ENCODE measurements at regions of chr19 and their contacts with region 1.

Region 1: GRCh38 chr19:50431343-50432220 is 1.1 kb upstream of the MYBPC2 start:
- DNase-seq: peak; percentile 88
- H3K4me3 Mint-ChIP-seq: peak overlapping the region; percentile 89
- H3K27ac Mint-ChIP-seq: peak overlapping the region; percentile 93
- H3K4me1 Mint-ChIP-seq: peaks cover 12% of the 10 kb centered on the region
- H3K27me3 Mint-ChIP-seq: peaks cover 13% of the 10 kb centered on the region

Region 2: DNA sequence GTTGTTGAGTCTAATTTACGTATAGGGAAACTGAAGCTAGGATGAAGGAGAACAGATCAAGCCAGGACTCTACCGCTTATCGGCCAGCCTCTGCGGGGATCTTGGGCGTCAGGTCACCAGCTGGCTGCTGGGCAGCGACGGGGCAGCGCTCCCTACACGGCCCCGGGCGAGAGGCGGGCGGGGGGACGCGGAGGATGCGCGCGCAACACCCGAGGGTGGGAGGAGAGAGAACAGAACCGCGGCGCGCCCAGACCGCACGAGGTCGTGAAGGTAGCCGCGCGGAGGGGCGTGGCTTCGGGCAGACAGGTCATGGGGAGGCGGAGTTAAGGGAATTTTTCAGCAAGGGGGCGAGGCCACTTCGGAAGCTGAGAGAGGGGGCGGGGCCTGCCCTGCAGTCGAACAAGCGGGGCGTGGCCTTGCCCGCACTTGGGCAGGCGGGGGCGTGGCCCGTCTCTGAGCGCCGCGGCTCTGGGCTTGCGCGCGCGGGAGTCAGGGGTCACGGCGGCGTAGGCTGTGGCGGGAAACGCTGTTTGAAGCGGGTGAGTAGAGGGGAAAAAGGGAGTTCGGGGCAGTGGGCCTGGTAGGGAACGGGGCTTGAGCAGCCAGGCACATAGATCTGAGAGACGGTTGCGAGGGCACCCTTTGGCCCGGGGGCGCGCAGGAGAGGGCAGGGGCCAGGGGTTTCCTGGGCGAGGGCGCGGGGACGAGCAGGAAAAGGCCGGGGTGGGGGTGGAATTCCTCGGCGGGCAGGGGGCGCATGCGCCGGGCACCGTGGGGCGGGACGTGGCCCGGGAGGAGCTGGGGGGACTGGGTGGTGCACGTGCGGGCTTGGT is 47.5 kb before region 1 on chr19 and contains the start of gene POLD1:
- intact Hi-C with region 1: loop called (anchors 1 kb)
- DNase-seq: peak; percentile 99
- H3K4me3 Mint-ChIP-seq: peak within 1 kb of the TSS; percentile 91
- H3K27ac Mint-ChIP-seq: peak within 1 kb of the TSS; percentile 96
- H3K4me1 Mint-ChIP-seq: peaks cover 28% of the 10 kb centered on the region
- H3K27me3 Mint-ChIP-seq: no peaks in the 10 kb centered on the region
- total RNA-seq, gene POLD1: 171 and 178 TPM in 2 replicates

Region 3: DNA sequence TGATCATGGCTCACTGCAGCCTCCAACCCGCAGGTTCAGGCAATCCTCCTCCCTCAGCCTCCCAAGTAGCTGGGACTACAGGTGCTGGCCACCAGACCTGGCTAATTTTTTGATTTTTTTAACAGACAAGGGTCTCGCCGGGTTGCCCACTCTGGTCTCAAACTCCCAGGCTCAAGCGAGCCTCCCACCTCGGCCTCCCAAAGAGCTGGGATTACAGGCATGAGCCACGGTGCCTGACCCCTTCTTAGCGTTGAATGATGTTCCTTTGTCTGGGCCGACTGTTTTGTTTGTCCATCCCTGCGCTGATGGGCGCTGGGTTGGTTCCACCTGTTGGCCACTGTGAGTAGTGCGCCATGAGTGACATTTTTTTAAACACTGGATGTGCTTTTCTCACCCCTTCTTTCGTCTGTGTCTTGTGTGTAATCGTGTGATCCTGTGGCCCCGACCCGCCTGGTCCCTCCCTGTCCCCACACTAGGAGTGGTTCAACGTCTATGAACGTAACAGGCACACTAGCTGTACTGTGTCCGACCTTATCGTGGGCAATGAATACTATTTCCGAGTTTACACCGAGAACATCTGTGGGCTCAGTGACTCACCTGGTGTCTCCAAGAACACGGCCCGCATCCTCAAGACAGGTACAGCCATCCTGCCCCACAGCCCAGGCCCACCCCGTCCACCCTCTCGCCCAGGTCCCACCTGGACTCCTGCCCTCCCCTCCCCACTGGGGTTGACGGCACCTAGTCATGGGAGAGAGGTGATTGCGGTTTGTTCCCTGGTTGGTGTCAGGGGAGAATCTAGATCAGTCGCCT is 29.7 kb after region 1 on chr19:
- intact Hi-C with region 1: loop called (anchors 2 kb)
- DNase-seq: peak; percentile 56
- H3K4me3 Mint-ChIP-seq: no peak overlapping the region
- H3K27ac Mint-ChIP-seq: no peak overlapping the region
- H3K4me1 Mint-ChIP-seq: peaks cover 8% of the 10 kb centered on the region
- H3K27me3 Mint-ChIP-seq: no peaks in the 10 kb centered on the region

Region 4: DNA sequence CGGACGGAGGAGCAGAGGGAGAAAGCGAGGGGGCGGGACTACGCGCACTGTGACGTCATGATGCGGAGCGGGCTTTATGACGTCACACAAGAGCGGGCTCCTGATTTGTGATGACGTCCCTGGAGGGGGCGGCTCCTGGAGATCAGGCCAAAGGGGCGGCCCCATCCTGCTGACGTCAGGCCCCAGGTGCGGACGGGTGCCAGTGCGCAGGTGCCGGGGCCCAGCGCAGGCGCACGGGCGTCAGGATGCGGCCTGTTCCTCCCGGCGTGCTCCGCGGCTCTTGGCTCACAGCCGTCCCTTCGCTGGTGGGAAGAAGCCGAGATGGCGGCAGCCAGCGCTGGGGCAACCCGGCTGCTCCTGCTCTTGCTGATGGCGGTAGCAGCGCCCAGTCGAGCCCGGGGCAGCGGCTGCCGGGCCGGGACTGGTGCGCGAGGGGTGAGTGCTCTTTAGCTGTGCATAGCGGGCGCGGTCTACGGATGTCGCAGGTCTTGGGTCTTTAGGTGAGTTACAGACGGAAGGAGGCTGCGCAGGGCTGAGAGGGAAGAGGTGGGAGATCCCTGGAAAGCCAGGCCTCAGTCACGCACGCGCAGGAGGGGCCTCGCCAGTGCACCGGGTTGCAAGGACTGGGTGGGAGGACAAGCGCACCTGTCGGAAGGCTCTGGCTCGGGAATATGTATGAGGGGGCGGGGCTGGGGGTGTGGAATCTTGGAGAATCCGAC is 44.8 kb after region 1 on chr19 and contains the starts of genes EMC10 and GARIN5A:
- intact Hi-C with region 1: loop called (anchors 1 kb)
- DNase-seq: peak; percentile 92
- H3K4me3 Mint-ChIP-seq: peak within 1 kb of the TSS; percentile 91
- H3K27ac Mint-ChIP-seq: peak within 1 kb of the TSS; percentile 72
- H3K4me1 Mint-ChIP-seq: peaks cover 20% of the 10 kb centered on the region
- H3K27me3 Mint-ChIP-seq: no peaks in the 10 kb centered on the region
- total RNA-seq, gene EMC10: 90.0 and 95.4 TPM in 2 replicates
- total RNA-seq, gene GARIN5A: 0.39 and 0.88 TPM in 2 replicates

Measured in activated T-helper 1 cell treated with anti-CD3 and anti-CD28 coated beads, Interleukin-12 subunit alpha, Interleukin-12 subunit beta, Interleukin-2, Interleukin-4 antibody, amounts not matched to agents 30 ng/mL and 10 ng/mL and 1 ng/mL, durations not matched to agents 14 hours and 24 hours and 36 hours (primary cell).